Activated naive CD4-positive, alpha-beta T cell treated with anti-CD3 and anti-CD28 coated beads, Interleukin-2, amount 10 ng/mL, durations not matched to agents 7 days and 5 days (primary cell): ENCODE measurements at regions of chr1 and their contacts with region 1.

Region 1: DNA sequence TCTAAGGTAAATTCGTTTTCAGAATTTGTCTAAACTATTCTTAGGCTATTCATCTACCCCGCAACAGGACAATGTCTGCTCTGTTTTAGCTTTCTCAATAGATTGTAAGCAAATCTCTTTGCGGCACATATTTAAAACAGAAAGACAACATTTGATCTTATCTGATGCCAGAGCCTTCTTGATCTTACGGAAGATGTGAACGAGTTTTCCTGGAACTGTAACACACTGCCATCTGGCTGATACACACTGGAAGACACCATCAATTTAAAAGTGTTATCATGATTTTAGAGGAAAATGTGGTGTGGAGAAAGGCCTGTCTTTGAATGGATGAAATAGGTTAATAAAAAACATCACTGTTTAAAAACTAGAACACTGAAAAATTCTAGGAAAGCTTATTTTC is 36.1 kb downstream of the COA6 start:
- DNase-seq: peak; percentile 48
- H3K4me3 Mint-ChIP-seq: peak overlapping the region; percentile 53
- H3K27ac Mint-ChIP-seq: peak overlapping the region; percentile 95
- H3K4me1 Mint-ChIP-seq: peaks cover 46% of the 10 kb centered on the region
- H3K27me3 Mint-ChIP-seq: no peaks in the 10 kb centered on the region

Region 2: DNA sequence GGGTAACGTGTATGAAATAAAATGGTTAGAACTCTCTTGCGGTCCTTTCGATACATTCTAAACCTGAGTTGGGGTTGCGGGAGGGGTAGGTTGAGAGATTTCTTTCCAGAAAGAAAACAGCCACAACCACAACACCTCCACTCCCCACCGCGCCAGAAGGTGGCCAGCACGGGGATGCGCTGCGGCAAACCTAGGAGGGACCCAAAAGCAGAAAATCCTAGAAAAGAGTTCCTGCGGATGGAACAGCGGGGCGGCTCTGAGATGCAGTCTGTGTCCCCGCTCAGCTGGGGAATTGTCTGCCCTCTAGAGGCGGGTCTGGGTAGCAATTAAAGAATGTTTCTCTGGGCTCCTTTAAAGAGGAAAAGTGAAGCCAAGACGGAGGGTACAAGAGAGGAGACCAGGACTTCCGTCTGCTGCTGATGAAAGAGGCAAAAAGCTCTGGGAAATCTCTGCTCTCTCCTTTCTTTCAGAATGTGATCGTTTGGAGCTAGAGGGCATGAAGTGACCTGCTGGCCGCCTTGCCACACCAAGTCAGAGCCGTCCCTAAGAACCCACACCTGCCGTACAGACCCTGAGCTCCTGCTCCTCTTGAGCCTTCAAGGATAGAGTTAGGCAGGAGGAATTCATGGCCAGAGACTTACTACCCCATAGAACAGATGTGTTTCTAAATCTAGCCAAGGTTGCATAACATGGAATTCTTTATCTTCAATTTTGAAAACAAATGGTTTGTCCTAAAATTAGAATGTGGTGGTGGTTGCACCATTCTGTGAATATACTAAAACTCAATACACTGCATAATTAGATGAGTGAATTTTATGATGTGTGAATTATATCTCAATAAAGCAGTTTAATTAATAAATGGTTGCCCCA is 82.6 kb before region 1 on chr1:
- CTCF ChIA-PET with region 1: interaction called, 10 read pairs
- DNase-seq: peak; percentile 78
- H3K4me3 Mint-ChIP-seq: peak overlapping the region; percentile 75
- H3K27ac Mint-ChIP-seq: peak overlapping the region; percentile 58
- H3K4me1 Mint-ChIP-seq: peaks cover 29% of the 10 kb centered on the region
- H3K27me3 Mint-ChIP-seq: peaks cover 29% of the 10 kb centered on the region

Region 3: GRCh38 chr1:234373064-234373958 is 36.0 kb before region 1 on chr1 and contains the start of gene COA6:
- CTCF ChIA-PET with region 1: interaction called, 16 read pairs
- DNase-seq: peak; percentile 91
- H3K4me3 Mint-ChIP-seq: peak within 1 kb of the TSS; percentile 88
- H3K27ac Mint-ChIP-seq: peak within 1 kb of the TSS; percentile 100
- H3K4me1 Mint-ChIP-seq: peaks cover 52% of the 10 kb centered on the region
- H3K27me3 Mint-ChIP-seq: no peaks in the 10 kb centered on the region

Region 4: DNA sequence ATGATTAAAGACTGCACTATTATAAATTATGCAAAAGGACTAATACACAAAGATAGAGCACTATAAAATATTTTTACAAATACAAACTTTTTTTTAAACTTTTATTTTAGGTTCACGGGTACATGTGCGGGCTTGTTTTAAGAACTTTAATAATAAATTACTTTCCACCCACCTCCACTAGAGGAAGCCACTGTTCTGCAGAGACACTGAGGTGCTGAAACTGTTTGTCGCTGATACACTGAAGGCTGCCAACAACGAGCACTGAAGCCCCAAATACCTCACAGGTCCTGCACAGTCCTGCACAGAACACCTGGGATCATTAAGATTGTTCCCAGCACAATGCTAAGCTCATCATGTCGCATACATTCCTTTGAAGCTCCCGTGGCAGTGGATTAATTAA is 16.1 kb before region 1 on chr1:
- CTCF ChIA-PET with region 1: interaction called, 11 read pairs
- DNase-seq: peak; percentile 25
- H3K4me3 Mint-ChIP-seq: no peak overlapping the region
- H3K27ac Mint-ChIP-seq: peak overlapping the region; percentile 54
- H3K4me1 Mint-ChIP-seq: peaks cover 11% of the 10 kb centered on the region
- H3K27me3 Mint-ChIP-seq: no peaks in the 10 kb centered on the region